Activated CD4-positive, alpha-beta T cell treated with anti-CD3 and anti-CD28 coated beads, Interleukin-2, amount 10 ng/mL, durations not matched to agents 24 days and 14 days (primary cell): ENCODE measurements at regions of chrX and their contacts with region 1.

Region 1: GRCh38 chrX:56563231-56564161 is at the start of gene UBQLN2:
- DNase-seq: peak; percentile 92
- H3K4me3 Mint-ChIP-seq: peak within 1 kb of the TSS; percentile 92
- H3K27ac Mint-ChIP-seq: peak within 1 kb of the TSS; percentile 99
- H3K4me1 Mint-ChIP-seq: peaks cover 11% of the 10 kb centered on the region
- H3K27me3 Mint-ChIP-seq: no peaks in the 10 kb centered on the region
- total RNA-seq, gene UBQLN2: 37.8 and 38.5 TPM in 2 replicates

Region 2: GRCh38 chrX:55907968-55908607 is 655.4 kb before region 1 on chrX:
- intact Hi-C with region 1: loop called (anchors 5 kb)
- DNase-seq: peak; percentile 82
- H3K4me3 Mint-ChIP-seq: peak overlapping the region; percentile 93
- H3K27ac Mint-ChIP-seq: peak overlapping the region; percentile 92
- H3K4me1 Mint-ChIP-seq: peaks cover 23% of the 10 kb centered on the region
- H3K27me3 Mint-ChIP-seq: no peaks in the 10 kb centered on the region

Region 3: DNA sequence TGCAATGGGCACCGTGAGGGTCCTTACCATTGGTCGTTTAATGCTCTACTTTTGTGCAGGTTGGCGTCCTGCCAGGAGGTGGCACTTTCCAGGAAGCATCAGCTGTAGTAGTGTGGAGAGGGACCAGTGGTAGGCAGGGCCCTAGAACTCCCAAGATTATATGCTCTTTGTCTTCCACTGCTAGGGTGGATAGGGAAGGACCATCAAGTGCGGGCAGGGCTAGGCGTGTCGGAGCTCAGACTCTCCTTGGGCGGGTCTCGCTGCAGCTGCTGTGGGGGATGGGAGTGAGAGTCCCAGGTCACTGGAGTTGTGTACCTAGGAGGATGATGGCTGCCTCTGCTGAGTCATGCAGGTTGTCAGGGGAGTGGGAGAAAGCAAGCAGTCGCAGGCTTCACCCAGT is 196.6 kb before region 1 on chrX:
- intact Hi-C with region 1: loop called (anchors 1 kb)
- DNase-seq: no peak
- H3K4me3 Mint-ChIP-seq: no peak overlapping the region
- H3K27ac Mint-ChIP-seq: peak overlapping the region; percentile 34
- H3K4me1 Mint-ChIP-seq: peaks cover 48% of the 10 kb centered on the region
- H3K27me3 Mint-ChIP-seq: no peaks in the 10 kb centered on the region

Region 4: DNA sequence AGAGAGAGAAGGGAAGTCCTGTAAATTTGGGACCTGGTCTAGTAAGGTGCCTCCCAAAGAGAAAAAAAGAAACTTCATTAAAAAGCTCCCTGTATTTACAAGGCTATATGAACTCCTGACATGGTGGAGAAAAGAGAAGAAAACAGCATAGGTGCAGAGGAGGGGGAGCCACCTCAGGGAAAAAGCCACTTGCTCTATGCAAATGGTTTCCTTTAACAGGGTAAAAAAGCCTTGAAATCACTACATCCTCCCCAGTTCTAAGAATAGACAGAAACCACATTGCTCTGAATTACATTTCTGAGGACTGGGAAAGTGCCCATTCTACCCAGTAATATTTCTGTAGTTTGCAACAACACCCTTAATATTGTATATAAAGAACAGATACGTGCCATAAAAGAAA is 165.9 kb before region 1 on chrX:
- intact Hi-C with region 1: loop called (anchors 5 kb)
- DNase-seq: peak; percentile 71
- H3K4me3 Mint-ChIP-seq: peak overlapping the region; percentile 69
- H3K27ac Mint-ChIP-seq: peak overlapping the region; percentile 79
- H3K4me1 Mint-ChIP-seq: peaks cover 18% of the 10 kb centered on the region
- H3K27me3 Mint-ChIP-seq: no peaks in the 10 kb centered on the region

Region 5: DNA sequence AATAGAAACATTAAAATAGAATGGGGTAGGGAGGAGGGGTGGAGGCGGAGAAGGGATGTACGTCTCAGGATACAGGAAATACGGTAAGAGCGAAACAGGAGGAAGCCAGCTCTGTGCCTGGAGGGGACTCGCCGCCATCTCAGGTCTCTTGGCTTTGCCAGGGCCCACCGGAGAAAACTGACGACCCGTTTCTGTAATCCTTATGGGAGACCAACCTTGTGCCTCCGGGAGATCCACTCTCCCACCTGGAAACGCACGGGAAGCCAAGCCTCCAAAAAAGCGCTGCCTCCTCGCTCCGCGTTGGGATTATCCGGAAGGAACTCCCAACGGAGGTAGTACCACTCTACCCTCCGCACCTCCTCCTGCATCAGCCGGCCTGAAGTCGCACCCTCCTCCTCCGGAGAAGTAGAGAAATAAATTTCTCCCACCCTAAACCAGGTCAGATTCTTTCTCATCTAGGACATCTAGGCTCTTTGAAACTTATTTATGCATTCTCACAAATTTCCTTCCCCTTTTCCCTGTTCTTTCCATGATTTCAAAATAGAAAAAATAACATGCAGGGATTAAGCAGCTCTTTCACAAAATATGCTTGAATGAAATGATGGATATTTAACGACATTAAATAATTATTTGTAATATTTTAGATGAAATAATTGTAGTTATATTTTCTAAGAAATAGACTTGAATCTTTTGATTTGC is 165.8 kb after region 1 on chrX and contains the start of gene NBDY:
- intact Hi-C with region 1: loop called (anchors 2 kb)
- DNase-seq: peak; percentile 75
- H3K4me3 Mint-ChIP-seq: peak within 1 kb of the TSS; percentile 94
- H3K27ac Mint-ChIP-seq: peak within 1 kb of the TSS; percentile 89
- H3K4me1 Mint-ChIP-seq: peaks cover 18% of the 10 kb centered on the region
- H3K27me3 Mint-ChIP-seq: no peaks in the 10 kb centered on the region
- total RNA-seq, gene NBDY: 29.8 and 29.9 TPM in 2 replicates

Region 6: DNA sequence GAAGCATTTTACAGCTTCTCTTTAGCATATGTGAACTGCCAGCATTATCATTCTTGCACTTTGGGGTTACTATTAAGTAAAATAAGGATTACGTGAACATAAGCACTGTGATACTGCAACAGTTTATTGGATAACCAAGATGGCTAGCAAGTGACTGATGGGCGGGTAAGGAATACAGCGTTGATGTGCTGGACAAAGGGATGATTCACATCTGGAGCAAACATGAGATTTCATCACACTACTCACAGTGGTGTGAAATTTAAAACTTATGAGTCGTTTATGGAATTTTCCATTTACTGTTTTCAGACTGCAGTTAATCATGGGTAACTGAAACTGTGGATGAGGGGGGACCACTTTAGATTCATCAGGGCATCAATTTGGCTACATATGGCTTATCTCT is 181.5 kb after region 1 on chrX:
- intact Hi-C with region 1: no loop called
- DNase-seq: no peak
- H3K4me3 Mint-ChIP-seq: no peak overlapping the region
- H3K27ac Mint-ChIP-seq: peak overlapping the region; percentile 29
- H3K4me1 Mint-ChIP-seq: peaks cover 13% of the 10 kb centered on the region
- H3K27me3 Mint-ChIP-seq: no peaks in the 10 kb centered on the region

Region 7: GRCh38 chrX:56995271-56995994 is 431.9 kb after region 1 on chrX and contains the start of gene SPIN3:
- intact Hi-C with region 1: loop called (anchors 10 kb)
- DNase-seq: peak; percentile 86
- H3K4me3 Mint-ChIP-seq: peak within 1 kb of the TSS; percentile 87
- H3K27ac Mint-ChIP-seq: peak within 1 kb of the TSS; percentile 91
- H3K4me1 Mint-ChIP-seq: peaks cover 25% of the 10 kb centered on the region
- H3K27me3 Mint-ChIP-seq: no peaks in the 10 kb centered on the region
- total RNA-seq, gene SPIN3: 9.3 and 9.5 TPM in 2 replicates

Region 8: GRCh38 chrX:57083143-57083542 is 519.6 kb after region 1 on chrX:
- intact Hi-C with region 1: no loop called
- DNase-seq: no peak
- H3K4me3 Mint-ChIP-seq: no peak overlapping the region
- H3K27ac Mint-ChIP-seq: no peak overlapping the region
- H3K4me1 Mint-ChIP-seq: no peaks in the 10 kb centered on the region
- H3K27me3 Mint-ChIP-seq: no peaks in the 10 kb centered on the region

Region 9: DNA sequence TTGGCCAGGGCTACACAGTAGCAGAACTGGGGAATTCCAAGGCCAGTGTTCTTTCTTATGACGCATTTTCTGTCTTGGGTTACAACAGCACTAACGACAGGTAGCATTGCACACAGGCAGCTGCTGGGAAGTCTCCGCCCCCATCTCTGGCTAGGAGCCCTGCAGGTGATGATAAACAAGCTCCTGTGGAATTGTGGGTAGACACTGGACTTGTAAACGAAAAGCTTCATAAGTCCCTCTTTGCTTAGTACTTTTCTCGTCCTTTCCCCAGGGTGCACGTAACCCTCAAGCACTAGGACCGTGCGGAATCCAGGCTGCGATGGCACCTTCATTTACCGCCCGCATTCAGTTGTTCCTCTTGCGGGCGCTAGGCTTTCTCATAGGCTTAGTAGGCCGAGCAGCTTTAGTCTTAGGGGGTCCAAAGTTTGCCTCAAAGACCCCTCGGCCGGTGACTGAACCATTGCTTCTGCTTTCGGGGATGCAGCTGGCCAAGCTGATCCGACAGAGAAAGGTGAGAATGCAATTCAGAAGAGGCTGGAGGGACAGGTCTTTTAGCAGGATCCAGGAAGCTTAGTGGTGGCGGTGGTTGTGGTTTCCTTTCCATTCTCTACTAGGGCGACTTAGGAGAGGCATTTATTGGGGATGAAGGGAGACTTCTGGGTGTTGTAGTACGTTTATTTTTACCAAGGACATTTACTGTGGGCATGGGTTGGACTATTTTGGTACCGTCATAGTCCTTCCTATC is 723.2 kb after region 1 on chrX and contains the start of gene FAAH2:
- intact Hi-C with region 1: loop called (anchors 10 kb)
- DNase-seq: peak; percentile 86
- H3K4me3 Mint-ChIP-seq: peak within 1 kb of the TSS; percentile 91
- H3K27ac Mint-ChIP-seq: peak within 1 kb of the TSS; percentile 88
- H3K4me1 Mint-ChIP-seq: peaks cover 36% of the 10 kb centered on the region
- H3K27me3 Mint-ChIP-seq: no peaks in the 10 kb centered on the region
- total RNA-seq, gene FAAH2: 4.0 and 5.0 TPM in 2 replicates